ENCODE measurements at regions of chr4 and their contacts with region 1.

Region 1: DNA sequence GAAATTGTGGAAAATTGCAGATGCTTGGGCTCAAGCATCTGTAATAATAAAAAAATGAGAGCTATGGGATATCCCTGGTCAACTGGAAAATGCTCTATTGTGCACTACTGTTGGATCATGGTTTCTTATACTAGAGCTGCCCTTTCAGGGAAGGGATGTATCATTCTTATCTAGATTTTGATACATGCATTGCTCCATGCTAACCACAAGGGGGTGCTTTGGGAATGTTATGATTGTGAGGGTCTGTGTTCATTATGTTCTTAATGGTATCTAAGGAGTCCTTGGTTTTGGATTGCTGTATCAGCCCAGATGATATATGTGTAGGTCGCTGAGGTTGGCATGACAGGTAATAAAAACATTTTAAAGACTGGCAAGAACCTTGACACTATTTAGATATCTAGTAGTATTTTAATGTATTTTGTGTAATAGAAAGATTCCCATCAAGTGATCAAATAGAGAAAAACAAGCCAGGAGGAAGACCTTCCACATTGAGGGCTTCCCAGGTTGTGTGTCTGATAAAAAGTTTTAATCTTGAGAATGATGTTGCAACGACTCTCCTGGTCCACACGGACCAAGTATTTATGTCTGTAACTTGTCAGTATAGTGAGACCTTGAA is 49.2 kb upstream of the TLR2 start:
- DNase-seq: peak; percentile 63
- H3K4me3 Mint-ChIP-seq: no peak overlapping the region
- H3K27ac Mint-ChIP-seq: no peak overlapping the region
- H3K4me1 Mint-ChIP-seq: no peaks in the 10 kb centered on the region
- H3K27me3 Mint-ChIP-seq: no peaks in the 10 kb centered on the region
- CTCF ChIP-seq: peak; percentile 54

Region 2: GRCh38 chr4:153620352-153620751 is 14.5 kb before region 1 on chr4:
- CTCF ChIA-PET with region 1: interaction called, 19 read pairs
- POLR2A ChIA-PET with region 1: no interaction called
- intact Hi-C with region 1: no loop called
- DNase-seq: no peak
- H3K4me3 Mint-ChIP-seq: no peak overlapping the region
- H3K27ac Mint-ChIP-seq: no peak overlapping the region
- H3K4me1 Mint-ChIP-seq: no peaks in the 10 kb centered on the region
- H3K27me3 Mint-ChIP-seq: no peaks in the 10 kb centered on the region
- CTCF ChIP-seq: no peak

Region 3: GRCh38 chr4:153649572-153649991 is 14.7 kb after region 1 on chr4:
- CTCF ChIA-PET with region 1: interaction called, 23 read pairs
- POLR2A ChIA-PET with region 1: interaction called, 4 read pairs
- intact Hi-C with region 1: no loop called
- DNase-seq: peak; percentile 43
- H3K4me3 Mint-ChIP-seq: no peak overlapping the region
- H3K27ac Mint-ChIP-seq: no peak overlapping the region
- H3K4me1 Mint-ChIP-seq: peaks cover 26% of the 10 kb centered on the region
- H3K27me3 Mint-ChIP-seq: no peaks in the 10 kb centered on the region
- CTCF ChIP-seq: peak; percentile 7

Region 4: DNA sequence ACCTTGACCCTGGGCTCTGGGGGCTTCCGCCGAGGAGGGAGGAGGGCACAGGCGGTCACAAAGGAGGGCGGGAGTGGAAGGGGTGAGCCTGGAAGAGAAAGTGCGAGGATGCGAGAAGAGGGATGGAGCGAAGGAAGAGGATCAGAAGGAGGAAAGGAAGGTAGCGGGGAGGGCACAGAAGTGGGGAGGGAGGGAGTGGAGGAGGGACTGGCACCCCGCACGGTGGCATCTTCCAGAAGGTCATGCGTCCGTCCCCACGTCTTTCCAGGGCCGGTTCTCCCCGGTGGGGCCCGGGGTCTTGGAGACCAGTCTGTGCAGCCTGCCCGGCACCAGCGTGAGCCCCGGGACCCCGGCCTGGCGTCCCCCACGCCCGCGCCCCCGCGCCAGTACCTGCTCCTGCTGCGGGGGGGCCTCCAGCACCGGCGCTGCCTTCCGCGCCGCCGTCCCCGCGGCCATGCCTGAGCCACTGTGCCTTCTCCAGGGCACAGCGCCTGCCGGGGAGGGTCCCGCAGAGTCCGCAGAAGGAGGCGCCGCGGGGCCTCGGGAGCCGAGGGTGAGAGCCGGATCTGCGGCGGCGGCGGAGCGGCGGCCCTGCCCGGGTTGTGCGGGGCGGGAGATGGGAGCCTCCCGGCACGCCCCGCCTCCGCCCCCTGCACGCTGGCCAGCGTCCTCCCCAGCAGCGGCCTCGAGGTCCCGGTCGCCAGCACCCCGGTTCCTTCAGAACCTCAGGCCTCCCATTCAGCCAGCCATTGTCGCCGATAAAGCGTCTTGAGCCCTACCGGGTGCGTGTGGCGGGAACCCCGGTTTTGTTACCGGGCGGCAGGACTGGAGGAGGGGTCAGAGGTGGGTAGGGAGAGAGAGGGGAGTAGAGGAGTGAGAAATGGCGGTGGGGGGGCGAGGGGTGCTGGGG is 124.8 kb after region 1 on chr4 and contains the start of gene RNF175:
- CTCF ChIA-PET with region 1: interaction called, 11 read pairs
- POLR2A ChIA-PET with region 1: interaction called, 3 read pairs
- intact Hi-C with region 1: no loop called
- DNase-seq: no peak
- H3K4me3 Mint-ChIP-seq: peak within 1 kb of the TSS; percentile 55
- H3K27ac Mint-ChIP-seq: no peak within 1 kb of the TSS
- H3K4me1 Mint-ChIP-seq: no peaks in the 10 kb centered on the region
- H3K27me3 Mint-ChIP-seq: no peaks in the 10 kb centered on the region
- CTCF ChIP-seq: no peak
- total RNA-seq, gene RNF175: 0.42 and 0.66 TPM in 2 replicates

Region 5: GRCh38 chr4:153931804-153932203 is 297.0 kb after region 1 on chr4:
- CTCF ChIA-PET with region 1: no interaction called
- POLR2A ChIA-PET with region 1: no interaction called
- intact Hi-C with region 1: no loop called
- DNase-seq: peak; percentile 51
- H3K4me3 Mint-ChIP-seq: no peak overlapping the region
- H3K27ac Mint-ChIP-seq: no peak overlapping the region
- H3K4me1 Mint-ChIP-seq: peaks cover 7% of the 10 kb centered on the region
- H3K27me3 Mint-ChIP-seq: no peaks in the 10 kb centered on the region
- CTCF ChIP-seq: no peak

Region 6: DNA sequence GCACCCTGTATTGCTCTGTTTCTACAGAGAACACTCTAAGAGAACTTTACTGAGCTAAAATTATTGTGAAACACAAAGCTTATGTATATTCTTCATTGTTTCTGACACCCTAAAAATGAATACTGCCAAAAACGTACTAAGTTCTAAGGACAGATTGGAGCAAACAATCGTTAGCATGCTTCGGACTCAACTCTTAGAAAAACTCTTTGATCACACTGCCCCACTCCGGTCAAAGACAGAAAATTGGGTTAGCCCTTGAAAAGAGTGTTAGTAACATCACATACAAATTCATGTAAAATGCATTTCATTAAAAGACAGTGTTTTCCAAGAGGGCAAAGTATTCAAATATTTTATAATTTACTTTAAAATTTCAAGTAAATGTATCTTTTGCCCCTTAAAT is 679.4 kb after region 1 on chr4:
- CTCF ChIA-PET with region 1: no interaction called
- POLR2A ChIA-PET with region 1: no interaction called
- intact Hi-C with region 1: loop called (anchors 10 kb)
- DNase-seq: peak; percentile 53
- H3K4me3 Mint-ChIP-seq: no peak overlapping the region
- H3K27ac Mint-ChIP-seq: no peak overlapping the region
- H3K4me1 Mint-ChIP-seq: no peaks in the 10 kb centered on the region
- H3K27me3 Mint-ChIP-seq: no peaks in the 10 kb centered on the region
- CTCF ChIP-seq: peak; percentile 39

Measured in MCF 10A (cell line).